K562 (cell line): ENCODE measurements at regions of chr2 and their contacts with region 1.

Region 1: GRCh38 chr2:177164584-177165052 is 48.0 kb upstream of the HNRNPA3 start:
- DNase-seq: peak; percentile 80 to 92 (median 82)
- ATAC-seq: peak; percentile 64
- H3K4me3 ChIP-seq: no peak overlapping the region
- H3K27ac ChIP-seq: peak overlapping the region; percentile 71; the same call in 2 of the 3 replicates
- H3K4me1 ChIP-seq: peaks cover 15 to 40% of the 10 kb centered on the region in 2 experiments
- H3K27me3 ChIP-seq: no peaks in the 10 kb centered on the region
- CTCF ChIP-seq: peak; percentile 97 to 100 (median 99)
- EP300 ChIP-seq: peak; percentile 78
- POLR2A ChIP-seq: no peak
- RAD21 ChIP-seq: peak; percentile 100

Region 2: GRCh38 chr2:176986487-176986886 is 178.1 kb before region 1 on chr2:
- CTCF ChIA-PET with region 1: no interaction called
- POLR2A ChIA-PET with region 1: no interaction called
- in situ Hi-C with region 1: no loop called
- intact Hi-C with region 1: no loop called
- DNase-seq: no peak
- ATAC-seq: no peak
- H3K4me3 ChIP-seq: no peak overlapping the region
- H3K27ac ChIP-seq: no peak overlapping the region
- H3K4me1 ChIP-seq: no peaks in the 10 kb centered on the region
- H3K27me3 ChIP-seq: peaks cover 0 to 3% of the 10 kb centered on the region in 2 experiments; a peak in 1 of 5 replicates
- CTCF ChIP-seq: no peak
- EP300 ChIP-seq: no peak
- POLR2A ChIP-seq: no peak
- RAD21 ChIP-seq: no peak

Region 3: DNA sequence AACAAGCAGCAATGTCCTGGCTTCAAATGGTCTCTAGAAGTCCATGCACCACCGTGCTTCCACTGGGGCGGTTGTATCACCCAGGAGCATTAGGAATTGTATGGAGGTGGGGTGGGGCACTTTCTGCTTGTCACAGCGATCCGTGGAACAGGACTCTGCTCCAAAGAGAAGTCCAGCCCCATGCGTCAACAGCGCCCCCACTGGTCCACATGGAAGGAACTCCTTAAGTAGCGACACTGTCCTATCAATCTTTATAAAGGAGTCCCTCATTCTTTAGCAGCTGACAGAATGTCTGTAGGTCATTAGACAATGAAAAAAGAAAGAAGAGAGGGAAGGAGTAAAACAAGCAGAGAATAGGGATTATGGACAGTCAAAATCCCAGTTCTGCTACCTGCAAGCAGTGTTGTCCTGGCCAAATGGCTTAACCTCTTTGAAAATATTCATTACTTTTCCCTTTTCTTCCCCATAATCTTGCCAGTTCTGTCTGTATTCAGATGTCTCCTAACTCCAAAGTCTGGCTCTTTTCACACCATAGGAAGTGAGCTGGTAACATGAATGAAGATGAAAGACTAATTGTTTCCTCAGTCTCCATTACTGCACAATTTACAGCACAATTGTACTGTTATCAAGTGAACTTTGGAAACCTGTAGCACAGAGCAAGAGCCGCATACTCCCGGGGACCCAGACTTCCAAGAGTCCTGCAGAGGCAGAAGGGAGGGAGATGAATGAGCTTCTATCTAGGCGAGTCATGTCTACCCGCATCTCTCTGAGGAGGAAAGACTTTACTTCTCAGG is 90.0 kb after region 1 on chr2:
- CTCF ChIA-PET with region 1: interaction called, 4 read pairs
- POLR2A ChIA-PET with region 1: interaction called, 6 read pairs
- in situ Hi-C with region 1: loop called (anchors 5 kb)
- intact Hi-C with region 1: loop called (anchors 1 kb)
- DNase-seq: peak; percentile 69 to 93 (median 73)
- ATAC-seq: peak; percentile 81
- H3K4me3 ChIP-seq: 0 out of 2 replicates have a peak overlapping the region, but pooled peaks have one; percentile 4
- H3K27ac ChIP-seq: peak overlapping the region; percentile 59
- H3K4me1 ChIP-seq: peaks cover 35 to 79% of the 10 kb centered on the region in 2 experiments
- H3K27me3 ChIP-seq: no peaks in the 10 kb centered on the region
- CTCF ChIP-seq: peak; percentile 88 to 98 (median 96)
- EP300 ChIP-seq: no peak
- POLR2A ChIP-seq: no peak
- RAD21 ChIP-seq: peak; percentile 62 to 81

Region 4: GRCh38 chr2:177332041-177332991 is 167.7 kb after region 1 on chr2:
- CTCF ChIA-PET with region 1: interaction called, 80 read pairs
- POLR2A ChIA-PET with region 1: interaction called, 9 read pairs
- in situ Hi-C with region 1: loop called (anchors 5 kb)
- intact Hi-C with region 1: loop called (anchors 1 kb)
- DNase-seq: peak; percentile 61 to 84 (median 66)
- ATAC-seq: peak; percentile 83
- H3K4me3 ChIP-seq: no peak overlapping the region
- H3K27ac ChIP-seq: peak overlapping the region; percentile 43; the same call in 2 of the 3 replicates
- H3K4me1 ChIP-seq: peaks cover 0 to 21% of the 10 kb centered on the region in 2 experiments; a peak in 4 of 5 replicates
- H3K27me3 ChIP-seq: no peaks in the 10 kb centered on the region
- CTCF ChIP-seq: peak; percentile 78 to 95 (median 81)
- EP300 ChIP-seq: peak; percentile 60
- POLR2A ChIP-seq: no peak
- RAD21 ChIP-seq: peak; percentile 92

Region 5: GRCh38 chr2:177419274-177419673 is 254.7 kb after region 1 on chr2:
- CTCF ChIA-PET with region 1: interaction called, 47 read pairs
- POLR2A ChIA-PET with region 1: interaction called, 7 read pairs
- in situ Hi-C with region 1: loop called (anchors 10 kb)
- intact Hi-C with region 1: loop called (anchors 1 kb)
- DNase-seq: no peak
- ATAC-seq: peak; percentile 37; the same call in 1 of the 3 replicates
- H3K4me3 ChIP-seq: no peak overlapping the region
- H3K27ac ChIP-seq: no peak overlapping the region
- H3K4me1 ChIP-seq: no peaks in the 10 kb centered on the region
- H3K27me3 ChIP-seq: no peaks in the 10 kb centered on the region
- CTCF ChIP-seq: no peak
- EP300 ChIP-seq: no peak
- POLR2A ChIP-seq: no peak
- RAD21 ChIP-seq: no peak

Region 6: DNA sequence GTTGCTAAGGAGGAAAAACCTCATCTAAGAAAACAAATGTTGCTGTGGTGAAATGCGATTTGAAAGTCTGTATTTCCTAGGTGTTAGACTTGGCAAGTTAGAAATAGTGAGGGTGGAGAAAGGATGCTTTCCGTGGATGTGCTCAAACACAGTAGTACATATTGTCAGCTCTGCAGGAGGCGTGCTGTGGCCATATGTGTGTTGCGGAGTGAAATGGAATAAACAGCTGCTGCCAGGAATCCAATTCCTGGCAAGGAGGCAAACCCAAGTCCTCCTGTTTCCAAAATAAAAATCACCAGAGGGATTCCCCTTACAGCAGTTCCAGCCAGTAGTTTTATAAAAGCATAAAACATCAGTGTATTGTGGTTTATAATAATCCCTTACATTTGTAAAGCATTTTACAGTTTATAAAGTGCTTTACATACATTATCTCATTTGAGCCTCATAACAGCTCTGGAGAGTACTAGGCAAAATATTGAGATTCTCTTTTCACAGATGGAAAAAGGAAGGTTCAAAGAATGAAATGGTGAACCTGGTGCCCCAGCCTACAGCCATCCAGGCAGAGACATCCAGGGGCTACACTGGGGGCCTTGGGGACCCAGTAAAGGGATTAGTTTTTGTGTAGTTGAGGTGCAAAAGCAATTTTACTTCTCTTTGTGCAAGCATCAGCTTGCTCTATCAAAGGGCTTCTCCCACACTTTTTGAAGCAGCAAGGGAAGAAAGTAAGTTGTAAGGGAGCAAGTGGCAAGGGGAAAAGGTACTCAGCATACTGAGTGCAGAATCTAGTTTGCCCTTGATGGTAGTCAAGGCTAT is 433.9 kb after region 1 on chr2:
- CTCF ChIA-PET with region 1: no interaction called
- POLR2A ChIA-PET with region 1: no interaction called
- in situ Hi-C with region 1: loop called (anchors 10 kb)
- intact Hi-C with region 1: no loop called
- DNase-seq: no peak
- ATAC-seq: no peak
- H3K4me3 ChIP-seq: no peak overlapping the region
- H3K27ac ChIP-seq: no peak overlapping the region
- H3K4me1 ChIP-seq: peaks cover 5% of the 10 kb centered on the region in 2 experiments; a peak in 2 of 5 replicates
- H3K27me3 ChIP-seq: no peaks in the 10 kb centered on the region
- CTCF ChIP-seq: no peak
- EP300 ChIP-seq: no peak
- POLR2A ChIP-seq: no peak
- RAD21 ChIP-seq: no peak

Region 7: DNA sequence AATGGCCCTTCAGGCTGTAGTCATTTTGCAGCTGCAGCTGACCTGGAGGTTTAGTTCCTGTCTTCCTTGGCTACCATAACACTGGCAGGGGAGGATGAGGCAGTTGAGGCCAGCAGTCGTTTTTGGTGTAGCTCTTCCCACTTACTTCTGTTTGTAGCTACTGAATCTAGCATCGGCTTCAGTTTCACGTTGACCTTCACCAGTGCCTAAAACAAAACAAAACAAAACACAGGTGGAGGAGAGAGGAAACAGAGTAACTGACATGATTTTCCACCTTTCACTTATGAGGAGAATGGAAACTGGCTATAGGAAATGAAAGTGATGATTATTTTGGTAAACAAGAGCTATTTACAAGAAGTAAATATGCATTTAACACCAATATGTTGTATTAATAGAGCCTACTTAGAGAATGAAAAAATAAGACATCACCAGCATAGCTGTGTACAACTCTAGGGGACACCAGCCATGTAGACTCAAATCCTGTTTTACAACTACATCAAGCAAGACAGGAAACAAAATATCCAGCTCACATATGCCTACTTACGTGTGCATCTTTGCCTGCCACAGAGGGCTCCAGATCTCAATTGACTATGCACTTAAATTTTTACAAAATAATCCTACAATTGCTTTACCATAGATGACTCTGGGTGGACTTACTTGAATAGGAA is 464.9 kb after region 1 on chr2:
- CTCF ChIA-PET with region 1: no interaction called
- POLR2A ChIA-PET with region 1: no interaction called
- in situ Hi-C with region 1: no loop called
- intact Hi-C with region 1: loop called (anchors 10 kb)
- DNase-seq: no peak
- ATAC-seq: no peak
- H3K4me3 ChIP-seq: no peak overlapping the region
- H3K27ac ChIP-seq: no peak overlapping the region
- H3K4me1 ChIP-seq: peaks cover 0 to 10% of the 10 kb centered on the region in 2 experiments; a peak in 3 of 5 replicates
- H3K27me3 ChIP-seq: no peaks in the 10 kb centered on the region
- CTCF ChIP-seq: no peak
- EP300 ChIP-seq: no peak
- POLR2A ChIP-seq: no peak
- RAD21 ChIP-seq: no peak

Region 8: DNA sequence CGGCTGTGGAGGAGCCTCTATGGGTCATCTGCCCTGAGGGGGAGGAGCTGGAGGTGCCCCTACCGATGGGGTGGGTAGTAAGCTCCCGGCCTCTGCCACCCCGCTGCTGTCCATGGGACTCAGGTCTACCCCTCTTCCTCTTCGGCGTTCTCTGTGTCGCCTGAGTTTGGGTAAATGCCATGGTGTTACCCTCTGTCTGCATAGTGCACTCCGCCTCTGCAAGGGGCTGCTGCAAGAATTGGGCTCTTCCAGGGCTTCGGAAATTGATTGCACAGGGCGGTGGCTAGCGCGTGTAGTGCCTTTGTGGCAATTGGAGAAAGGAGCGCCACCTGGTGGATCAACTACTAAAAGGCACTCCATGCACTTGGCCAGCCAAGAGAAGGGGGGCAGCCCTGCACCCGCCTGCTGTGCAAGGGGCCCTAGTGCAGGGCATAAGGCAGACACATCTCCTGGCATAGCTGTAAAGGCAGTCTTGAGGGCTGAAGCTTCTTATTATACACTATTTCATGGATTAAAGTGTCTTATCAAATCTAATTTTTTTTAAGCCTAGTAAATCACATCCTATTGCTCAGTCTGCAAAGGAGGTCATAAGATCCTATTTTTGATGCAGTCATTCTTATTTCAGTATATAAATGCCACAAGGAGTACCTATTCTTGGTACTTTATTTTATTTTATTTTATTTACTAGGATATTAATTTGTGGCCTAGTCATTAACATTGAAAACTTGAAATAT is 599.1 kb after region 1 on chr2:
- CTCF ChIA-PET with region 1: no interaction called
- POLR2A ChIA-PET with region 1: no interaction called
- in situ Hi-C with region 1: loop called (anchors 10 kb)
- intact Hi-C with region 1: loop called (anchors 1 kb)
- DNase-seq: peak; percentile 74 to 90 (median 85)
- ATAC-seq: peak; percentile 98
- H3K4me3 ChIP-seq: no peak overlapping the region
- H3K27ac ChIP-seq: no peak overlapping the region
- H3K4me1 ChIP-seq: peaks cover 4 to 16% of the 10 kb centered on the region in 2 experiments; a peak in 4 of 5 replicates
- H3K27me3 ChIP-seq: no peaks in the 10 kb centered on the region
- CTCF ChIP-seq: peak; percentile 91 to 96 (median 92)
- EP300 ChIP-seq: no peak
- POLR2A ChIP-seq: no peak
- RAD21 ChIP-seq: peak; percentile 69 to 77